ENCODE measurements at regions of chr6 and their contacts with region 1.

Region 1: GRCh38 chr6:41027799-41028628 is 11.0 kb downstream of the UNC5CL start:
- DNase-seq: peak; percentile 85
- ATAC-seq: peak; percentile 94
- H3K4me3 Mint-ChIP-seq: peak overlapping the region; percentile 75
- H3K27ac Mint-ChIP-seq: peak overlapping the region; percentile 78
- H3K4me1 Mint-ChIP-seq: peaks cover 19% of the 10 kb centered on the region
- H3K27me3 Mint-ChIP-seq: no peaks in the 10 kb centered on the region

Region 2: GRCh38 chr6:40788661-40789655 is 239.1 kb before region 1 on chr6:
- CTCF ChIA-PET with region 1: no interaction called
- DNase-seq: peak; percentile 70
- ATAC-seq: peak; percentile 91
- H3K4me3 Mint-ChIP-seq: no peak overlapping the region
- H3K27ac Mint-ChIP-seq: peak overlapping the region; percentile 76
- H3K4me1 Mint-ChIP-seq: peaks cover 22% of the 10 kb centered on the region
- H3K27me3 Mint-ChIP-seq: no peaks in the 10 kb centered on the region

Region 3: DNA sequence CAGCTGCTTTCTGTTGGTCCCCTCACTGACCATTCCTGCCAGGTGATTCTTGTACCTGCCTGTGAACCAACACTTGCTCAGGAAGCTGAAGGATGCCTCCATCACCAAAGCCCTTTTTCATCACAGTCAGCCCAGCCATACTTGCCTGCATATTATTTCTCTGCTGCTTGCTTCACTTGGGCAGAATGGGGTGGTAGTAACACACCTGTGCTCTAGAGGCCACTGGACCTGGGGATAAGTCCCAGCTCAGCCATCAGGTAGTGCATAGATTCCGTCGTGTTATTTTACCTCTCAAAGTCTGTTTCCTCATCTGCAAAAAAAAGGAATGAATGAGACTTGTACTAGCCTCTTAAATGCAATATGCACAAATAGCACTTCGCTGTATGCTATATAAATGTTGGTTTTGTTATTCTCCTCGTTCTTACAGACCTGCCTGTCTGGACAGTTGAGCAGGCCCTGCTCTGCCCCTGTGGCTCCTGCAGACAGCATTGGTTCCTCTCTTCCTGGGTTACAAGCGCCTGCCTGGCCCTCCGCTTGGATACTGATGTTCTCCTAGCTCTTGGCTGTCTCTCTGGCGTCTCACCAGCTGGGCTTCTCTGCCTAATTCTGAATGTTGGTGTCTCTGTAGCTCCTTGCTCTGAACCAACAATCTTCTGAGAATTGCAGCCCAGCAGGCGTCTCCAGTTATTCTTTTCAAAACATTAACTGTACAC is 140.8 kb before region 1 on chr6:
- CTCF ChIA-PET with region 1: no interaction called
- DNase-seq: no peak
- ATAC-seq: no peak
- H3K4me3 Mint-ChIP-seq: no peak overlapping the region
- H3K27ac Mint-ChIP-seq: no peak overlapping the region
- H3K4me1 Mint-ChIP-seq: no peaks in the 10 kb centered on the region
- H3K27me3 Mint-ChIP-seq: peaks cover 7% of the 10 kb centered on the region

Region 4: DNA sequence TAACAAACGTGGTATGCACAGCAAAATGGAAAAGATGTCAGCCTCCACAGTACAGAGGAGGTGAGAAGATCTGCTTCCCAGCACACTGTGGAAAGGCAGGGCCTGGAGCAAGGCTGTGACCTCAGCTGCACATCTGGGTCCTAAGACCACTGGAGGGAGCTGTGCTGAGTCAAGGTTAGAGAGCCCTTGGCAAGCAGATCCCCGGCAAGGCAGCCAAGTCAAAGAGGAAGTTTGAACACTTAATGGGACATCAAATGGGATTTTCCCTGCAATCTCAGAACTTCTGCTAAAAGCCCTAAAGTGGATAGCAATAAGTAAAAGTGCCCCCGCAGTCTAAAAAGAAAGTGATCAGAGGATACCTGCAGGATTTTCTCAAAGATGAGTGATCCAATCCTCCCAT is 28.4 kb before region 1 on chr6:
- CTCF ChIA-PET with region 1: interaction called, 20 read pairs
- DNase-seq: no peak
- ATAC-seq: peak; percentile 49
- H3K4me3 Mint-ChIP-seq: no peak overlapping the region
- H3K27ac Mint-ChIP-seq: no peak overlapping the region
- H3K4me1 Mint-ChIP-seq: no peaks in the 10 kb centered on the region
- H3K27me3 Mint-ChIP-seq: peaks cover 62% of the 10 kb centered on the region

Region 5: GRCh38 chr6:41008011-41008410 is 20.0 kb before region 1 on chr6:
- CTCF ChIA-PET with region 1: interaction called, 20 read pairs
- DNase-seq: no peak
- ATAC-seq: no peak
- H3K4me3 Mint-ChIP-seq: no peak overlapping the region
- H3K27ac Mint-ChIP-seq: no peak overlapping the region
- H3K4me1 Mint-ChIP-seq: peaks cover 5% of the 10 kb centered on the region
- H3K27me3 Mint-ChIP-seq: peaks cover 30% of the 10 kb centered on the region

Region 6: DNA sequence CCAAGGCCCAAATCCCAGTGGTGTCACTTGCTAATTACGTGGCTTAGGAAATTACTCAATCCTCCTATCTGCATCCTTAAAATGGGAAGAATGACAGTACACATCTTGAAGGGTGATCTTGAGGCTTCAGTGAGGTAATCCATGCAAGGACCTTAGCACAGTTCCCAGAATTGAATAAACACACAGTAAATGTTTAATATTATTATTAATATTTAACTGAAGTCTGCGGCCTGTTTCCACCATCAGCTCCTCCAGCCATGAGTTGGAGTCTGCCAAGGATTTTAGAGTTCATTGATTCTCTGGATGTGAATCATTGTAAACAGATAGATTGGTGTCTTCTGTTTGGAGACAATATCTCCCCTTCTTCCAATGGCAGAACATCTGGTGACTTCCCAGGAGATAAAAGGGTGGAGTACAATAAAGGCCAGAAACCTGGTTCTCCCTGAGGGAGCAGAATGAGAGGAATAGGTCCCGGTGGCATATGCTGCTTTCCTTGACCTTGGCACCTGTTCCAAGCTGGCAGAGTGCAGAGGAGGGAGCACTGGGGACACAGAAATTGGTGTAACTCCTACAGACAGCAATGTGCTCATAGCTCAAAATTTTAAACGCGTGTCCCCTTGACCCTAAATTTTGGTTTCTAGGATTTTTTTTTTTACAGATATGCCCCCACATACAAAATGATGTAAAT is 14.4 kb before region 1 on chr6:
- CTCF ChIA-PET with region 1: interaction called, 30 read pairs
- DNase-seq: no peak
- ATAC-seq: no peak
- H3K4me3 Mint-ChIP-seq: no peak overlapping the region
- H3K27ac Mint-ChIP-seq: no peak overlapping the region
- H3K4me1 Mint-ChIP-seq: no peaks in the 10 kb centered on the region
- H3K27me3 Mint-ChIP-seq: peaks cover 6% of the 10 kb centered on the region

Region 7: GRCh38 chr6:41039060-41039998 is 11.3 kb after region 1 on chr6 and contains the start of gene UNC5CL:
- CTCF ChIA-PET with region 1: interaction called, 82 read pairs
- DNase-seq: peak; percentile 75
- ATAC-seq: peak; percentile 77
- H3K4me3 Mint-ChIP-seq: no peak within 1 kb of the TSS
- H3K27ac Mint-ChIP-seq: no peak within 1 kb of the TSS
- H3K4me1 Mint-ChIP-seq: peaks cover 6% of the 10 kb centered on the region
- H3K27me3 Mint-ChIP-seq: no peaks in the 10 kb centered on the region
- total RNA-seq, gene UNC5CL: 1.3 to 2.5 TPM

Region 8: DNA sequence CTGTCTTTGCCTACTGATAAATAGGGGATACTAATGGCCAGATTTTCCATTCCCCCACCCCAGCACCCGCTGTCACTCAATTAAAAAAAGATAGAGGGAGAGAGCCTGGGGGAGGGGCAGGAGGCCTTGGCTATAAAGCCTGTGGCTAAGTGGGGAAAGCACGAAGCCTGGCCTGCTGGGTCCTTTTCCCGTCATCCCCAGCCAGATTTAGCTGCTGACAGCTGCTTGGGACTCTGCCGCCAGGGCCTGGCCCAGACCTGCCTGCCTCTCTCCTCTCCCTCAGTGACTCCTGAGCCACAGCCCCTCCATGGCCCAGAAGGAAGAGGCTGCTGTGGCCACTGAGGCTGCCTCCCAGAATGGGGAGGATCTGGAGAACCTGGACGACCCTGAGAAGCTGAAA is 25.0 kb after region 1 on chr6 and contains the start of gene APOBEC2:
- CTCF ChIA-PET with region 1: interaction called, 24 read pairs
- DNase-seq: peak; percentile 37
- ATAC-seq: no peak
- H3K4me3 Mint-ChIP-seq: no peak within 1 kb of the TSS
- H3K27ac Mint-ChIP-seq: peak within 1 kb of the TSS; percentile 61
- H3K4me1 Mint-ChIP-seq: peaks cover 11% of the 10 kb centered on the region
- H3K27me3 Mint-ChIP-seq: no peaks in the 10 kb centered on the region
- total RNA-seq, gene APOBEC2: not detected

Region 9: GRCh38 chr6:41072676-41073623 is 44.9 kb after region 1 on chr6 and contains the start of gene NFYA:
- CTCF ChIA-PET with region 1: interaction called, 18 read pairs
- DNase-seq: peak; percentile 100
- ATAC-seq: peak; percentile 79
- H3K4me3 Mint-ChIP-seq: peak within 1 kb of the TSS; percentile 96
- H3K27ac Mint-ChIP-seq: peak within 1 kb of the TSS; percentile 99
- H3K4me1 Mint-ChIP-seq: peaks cover 60% of the 10 kb centered on the region
- H3K27me3 Mint-ChIP-seq: no peaks in the 10 kb centered on the region
- total RNA-seq, gene NFYA: 25.0 to 31.5 TPM

Measured in activated CD8-positive, alpha-beta memory T cell treated with anti-CD3 and anti-CD28 coated beads, Interleukin-2, amount 10 ng/mL, durations not matched to agents 7 days and 5 days (primary cell).